Activated CD4-positive, alpha-beta T cell treated with anti-CD3 and anti-CD28 coated beads for 36 hours (primary cell): ENCODE measurements at regions of chr2 and their contacts with region 1.

Region 1: GRCh38 chr2:173354601-173355131 is at the start of gene CDCA7:
- DNase-seq: peak; percentile 86
- ATAC-seq: peak; percentile 68
- H3K4me3 Mint-ChIP-seq: peak within 1 kb of the TSS; percentile 87
- H3K27ac Mint-ChIP-seq: peak within 1 kb of the TSS; percentile 97
- H3K4me1 Mint-ChIP-seq: peaks cover 37% of the 10 kb centered on the region
- H3K27me3 Mint-ChIP-seq: peaks cover 46% of the 10 kb centered on the region
- total RNA-seq, gene CDCA7: 80.4 to 88.2 TPM

Region 2: DNA sequence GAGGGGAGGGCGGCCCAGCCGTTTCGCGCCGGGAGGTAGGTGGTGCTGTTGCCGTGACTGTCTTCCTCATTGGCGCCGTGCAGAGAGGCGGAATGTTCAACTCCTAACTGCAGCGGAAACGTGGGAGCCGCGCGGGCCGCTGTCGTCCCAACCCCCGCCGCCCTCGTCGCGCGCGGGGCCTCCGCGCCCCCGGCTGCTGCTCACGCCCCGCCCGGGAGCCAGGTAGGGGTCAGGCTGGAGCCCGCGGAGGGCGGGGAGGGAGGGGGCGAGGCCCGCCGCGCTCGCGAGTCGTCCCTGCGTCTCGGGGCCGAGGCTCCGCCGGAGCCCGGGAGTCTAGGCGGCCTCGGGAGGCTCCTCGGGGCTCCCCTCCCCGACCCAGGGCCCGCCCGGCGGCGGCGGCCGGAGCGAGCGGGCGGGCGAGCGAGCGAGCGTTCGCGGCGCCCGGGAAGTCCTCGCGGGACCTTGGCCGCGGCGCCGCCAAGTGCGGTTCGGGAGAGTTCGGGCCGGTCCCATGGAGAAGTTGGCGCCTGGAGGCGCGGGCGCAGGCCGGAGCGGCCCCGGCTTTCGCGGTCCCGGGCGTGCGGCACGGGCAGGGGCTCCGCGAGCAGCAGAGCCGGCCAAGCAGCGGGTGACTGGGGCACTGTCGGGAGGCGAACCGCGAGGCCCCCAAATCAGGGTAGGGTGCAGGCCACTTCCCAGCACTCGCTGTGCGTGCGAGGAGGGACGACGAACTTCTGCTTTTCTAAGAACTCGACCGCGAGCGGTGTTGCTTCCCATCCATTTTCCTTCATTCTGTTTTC is 278.7 kb before region 1 on chr2 and contains the start of gene MAP3K20:
- CTCF ChIA-PET with region 1: no interaction called
- POLR2A ChIA-PET with region 1: no interaction called
- intact Hi-C with region 1: loop called (anchors 5 to 10 kb)
- DNase-seq: peak; percentile 73
- ATAC-seq: peak; percentile 85
- H3K4me3 Mint-ChIP-seq: peak within 1 kb of the TSS; percentile 76
- H3K27ac Mint-ChIP-seq: peak within 1 kb of the TSS; percentile 76
- H3K4me1 Mint-ChIP-seq: peaks cover 22% of the 10 kb centered on the region
- H3K27me3 Mint-ChIP-seq: peaks cover 33% of the 10 kb centered on the region
- total RNA-seq, gene MAP3K20: 8.1 to 8.4 TPM